OCI-LY7 (cell line): ENCODE measurements at regions of chr2 and their contacts with region 1.

Region 1: DNA sequence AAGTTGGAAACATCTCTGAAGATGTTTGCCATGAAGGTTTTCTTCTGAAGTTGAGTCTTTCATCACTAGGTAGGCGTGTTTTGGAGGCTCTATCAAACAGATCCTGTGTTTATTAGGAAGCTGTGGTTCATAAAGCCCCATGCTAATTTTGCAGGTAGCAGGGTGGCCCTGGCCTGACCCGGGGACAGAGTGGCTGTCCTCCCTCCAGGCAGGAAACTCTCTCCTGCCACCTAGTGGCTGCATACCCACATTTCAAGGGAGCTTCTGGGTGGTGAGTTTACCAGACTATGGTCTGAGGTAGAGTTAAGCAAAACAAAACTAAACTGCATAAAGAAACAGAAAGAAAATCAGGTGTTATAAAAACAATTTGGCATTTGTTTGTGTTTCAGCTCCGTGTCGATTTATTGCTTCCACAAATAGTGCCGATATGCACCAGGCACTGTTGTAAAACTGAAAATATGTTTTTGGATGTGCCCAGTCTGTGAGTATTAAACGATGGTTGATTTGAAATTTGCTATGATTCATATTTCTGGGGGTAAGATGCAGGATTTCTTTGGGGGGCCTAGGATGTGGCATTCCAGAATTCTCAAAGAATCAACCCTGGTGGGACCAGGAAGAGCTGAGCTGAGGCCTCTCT is 26.0 kb upstream of the IL37 start:
- DNase-seq: peak; percentile 68
- H3K4me3 ChIP-seq: no peak overlapping the region
- H3K27ac ChIP-seq: no peak overlapping the region
- H3K4me1 ChIP-seq: peaks cover 20% of the 10 kb centered on the region
- CTCF ChIP-seq: peak; percentile 98

Region 2: DNA sequence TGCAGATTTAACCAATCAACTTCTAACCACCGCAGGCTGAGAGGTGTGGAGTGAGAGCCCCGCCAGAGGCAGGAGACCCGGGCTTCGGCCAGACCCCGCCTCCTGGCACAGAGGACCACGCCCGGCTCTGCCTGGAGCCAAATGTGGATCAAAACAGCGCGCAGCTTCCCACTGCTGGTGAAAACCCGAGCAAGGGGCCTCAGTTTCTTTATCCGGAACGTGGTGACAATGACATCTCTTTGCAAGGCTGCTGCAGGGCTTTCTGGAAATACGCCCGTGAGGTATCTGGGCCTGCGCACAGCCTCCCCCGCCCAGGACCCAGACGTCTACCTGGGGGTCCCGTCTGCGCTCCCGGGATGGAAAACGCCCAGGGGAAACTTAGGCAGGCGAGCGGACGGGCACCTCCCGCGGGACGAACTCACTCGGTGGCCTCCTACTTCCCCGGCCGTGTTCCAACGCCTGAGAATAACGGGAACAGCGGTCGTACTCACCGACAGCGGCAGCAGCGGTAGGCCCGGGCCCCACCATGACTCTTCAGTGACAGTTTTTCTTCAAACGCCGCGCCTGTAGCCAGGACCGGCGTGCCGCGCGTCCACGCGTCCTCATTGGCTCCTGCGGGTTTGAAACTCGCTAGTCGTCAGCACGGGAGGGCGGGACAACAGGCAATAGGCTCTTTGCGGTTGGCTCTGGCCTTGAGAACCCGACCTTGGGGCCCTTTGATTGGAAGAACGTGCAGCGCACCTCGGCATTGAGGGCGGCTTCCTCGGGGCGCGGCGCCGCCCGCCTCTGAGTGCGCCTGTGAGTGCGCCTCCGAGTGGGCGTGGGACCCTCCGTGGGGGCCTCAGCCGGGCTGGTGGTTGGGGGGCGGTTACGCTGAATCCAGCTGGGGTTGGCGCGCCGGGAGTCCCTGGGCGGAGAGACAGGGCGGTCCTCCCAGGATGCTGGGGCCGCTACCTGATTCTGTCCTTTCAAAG is 120.6 kb before region 1 on chr2 and contains the start of gene CKAP2L:
- CTCF ChIA-PET with region 1: no interaction called
- POLR2A ChIA-PET with region 1: interaction called, 3 read pairs
- intact Hi-C with region 1: loop called (anchors 1 kb)
- DNase-seq: peak; percentile 99
- H3K4me3 ChIP-seq: peak within 1 kb of the TSS; percentile 82
- H3K27ac ChIP-seq: peak within 1 kb of the TSS; percentile 75
- H3K4me1 ChIP-seq: peaks cover 25% of the 10 kb centered on the region
- CTCF ChIP-seq: no peak; the same call in 1 of the 2 replicates
- total RNA-seq, gene CKAP2L: 28.8 and 31.8 TPM in 2 replicates

Region 3: GRCh38 chr2:112836695-112837117 is 48.3 kb before region 1 on chr2 and contains the start of gene IL1B:
- CTCF ChIA-PET with region 1: no interaction called
- POLR2A ChIA-PET with region 1: no interaction called
- intact Hi-C with region 1: no loop called
- DNase-seq: no peak
- H3K4me3 ChIP-seq: no peak within 1 kb of the TSS
- H3K27ac ChIP-seq: no peak within 1 kb of the TSS
- H3K4me1 ChIP-seq: no peaks in the 10 kb centered on the region
- CTCF ChIP-seq: no peak
- total RNA-seq, gene IL1B: not detected in 2 replicates

Region 4: GRCh38 chr2:112920923-112921532 is 36.0 kb after region 1 on chr2:
- CTCF ChIA-PET with region 1: no interaction called
- POLR2A ChIA-PET with region 1: no interaction called
- intact Hi-C with region 1: no loop called
- DNase-seq: no peak
- H3K4me3 ChIP-seq: no peak overlapping the region
- H3K27ac ChIP-seq: no peak overlapping the region
- H3K4me1 ChIP-seq: no peaks in the 10 kb centered on the region
- CTCF ChIP-seq: no peak